ENCODE measurements at regions of chr17 and their contacts with region 1.

Region 1: DNA sequence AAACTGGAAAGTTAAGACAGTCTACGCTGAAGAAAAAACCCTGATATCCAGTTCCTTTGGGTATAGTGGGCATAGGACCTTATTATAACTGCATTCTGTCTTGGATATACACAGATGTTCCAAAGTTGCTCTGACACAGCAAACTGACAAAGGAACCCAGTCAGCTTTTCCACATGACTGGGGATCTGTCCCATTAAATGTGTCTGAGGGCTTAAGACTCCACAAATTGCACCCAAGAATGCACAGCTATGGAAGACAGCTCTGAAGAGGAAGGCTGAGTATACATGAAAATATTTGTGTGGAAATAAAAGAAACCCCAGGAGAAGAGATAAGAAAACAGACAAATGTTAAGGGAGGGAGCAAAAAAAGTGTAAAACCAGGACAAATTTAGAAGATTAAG is 114.1 kb downstream of the SPAG9 start:
- DNase-seq: no peak
- H3K4me3 ChIP-seq: no peak overlapping the region
- H3K27ac ChIP-seq: peak overlapping the region in 1 of 2 experiments; percentile 1; a peak in 1 of 4 replicates
- H3K4me1 ChIP-seq: no peaks in the 10 kb centered on the region
- H3K27me3 ChIP-seq: no peaks in the 10 kb centered on the region
- CTCF ChIP-seq: no peak
- EP300 ChIP-seq: no peak
- RAD21 ChIP-seq: no peak

Region 2: GRCh38 chr17:50995645-50996044 is 11.0 kb before region 1 on chr17:
- CTCF ChIA-PET with region 1: interaction called, 14 read pairs
- POLR2A ChIA-PET with region 1: interaction called, 5 read pairs
- DNase-seq: no peak
- H3K4me3 ChIP-seq: no peak overlapping the region
- H3K27ac ChIP-seq: no peak overlapping the region
- H3K4me1 ChIP-seq: no peaks in the 10 kb centered on the region
- H3K27me3 ChIP-seq: no peaks in the 10 kb centered on the region
- CTCF ChIP-seq: no peak
- EP300 ChIP-seq: no peak
- RAD21 ChIP-seq: no peak

Region 3: GRCh38 chr17:51046514-51047384 is 40.1 kb after region 1 on chr17:
- CTCF ChIA-PET with region 1: interaction called, 247 read pairs
- POLR2A ChIA-PET with region 1: interaction called, 3 read pairs
- DNase-seq: peak; percentile 84
- H3K4me3 ChIP-seq: peak overlapping the region; percentile 56 to 60
- H3K27ac ChIP-seq: peak overlapping the region; percentile 71 to 94
- H3K4me1 ChIP-seq: peaks cover 26 to 32% of the 10 kb centered on the region in 2 experiments
- H3K27me3 ChIP-seq: no peaks in the 10 kb centered on the region
- CTCF ChIP-seq: no peak; the same call in 1 of the 2 replicates
- EP300 ChIP-seq: peak in 1 of 2 experiments; percentile 57; a peak in 2 of 4 replicates
- RAD21 ChIP-seq: no peak